Endothelial cell of umbilical vein (primary cell): ENCODE measurements at regions of chr15 and their contacts with region 1.

Region 1: GRCh38 chr15:83011271-83012075 is at the start of gene C15orf40:
- DNase-seq: peak; percentile 89
- H3K4me3 ChIP-seq: peak within 1 kb of the TSS; percentile 74 to 100 (median 87)
- H3K27ac ChIP-seq: peak within 1 kb of the TSS; percentile 64
- H3K4me1 ChIP-seq: peaks cover 17% of the 10 kb centered on the region
- H3K27me3 ChIP-seq: no peaks in the 10 kb centered on the region
- CTCF ChIP-seq: peak; percentile 57 to 75
- POLR2A ChIP-seq: peak; percentile 92
- total RNA-seq, gene C15orf40: 20.9 and 27.9 TPM in 2 replicates

Region 2: DNA sequence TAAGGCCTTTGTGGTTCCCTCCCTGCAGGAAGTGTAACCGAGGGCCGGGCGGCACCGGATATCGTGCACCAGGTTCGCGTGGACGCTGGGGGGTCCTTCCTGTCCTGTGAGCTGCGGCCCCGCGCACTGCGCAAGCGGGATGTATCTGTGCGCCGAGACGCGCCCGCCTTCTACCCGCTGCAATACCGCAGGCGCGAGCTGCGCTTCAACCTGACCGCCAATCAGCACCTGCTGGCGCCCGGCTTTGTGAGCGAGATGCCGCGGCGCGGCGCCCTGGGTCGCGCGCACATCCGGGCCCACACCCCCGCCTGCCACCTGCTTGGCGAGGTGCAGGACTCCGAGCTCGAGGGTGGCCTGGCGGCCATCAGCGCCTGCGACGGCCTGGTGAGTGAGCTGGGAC is 713.0 kb before region 1 on chr15:
- CTCF ChIA-PET with region 1: no interaction called
- POLR2A ChIA-PET with region 1: no interaction called
- dilution Hi-C with region 1: no loop called
- intact Hi-C with region 1: no loop called
- DNase-seq: no peak
- H3K4me3 ChIP-seq: no peak overlapping the region
- H3K27ac ChIP-seq: no peak overlapping the region
- H3K4me1 ChIP-seq: no peaks in the 10 kb centered on the region
- H3K27me3 ChIP-seq: no peaks in the 10 kb centered on the region
- CTCF ChIP-seq: no peak
- POLR2A ChIP-seq: no peak

Region 3: GRCh38 chr15:82963356-82964341 is 47.8 kb before region 1 on chr15:
- CTCF ChIA-PET with region 1: no interaction called
- POLR2A ChIA-PET with region 1: no interaction called
- dilution Hi-C with region 1: no loop called
- intact Hi-C with region 1: no loop called
- DNase-seq: no peak
- H3K4me3 ChIP-seq: no peak overlapping the region
- H3K27ac ChIP-seq: no peak overlapping the region
- H3K4me1 ChIP-seq: no peaks in the 10 kb centered on the region
- H3K27me3 ChIP-seq: peaks cover 0 to 1% of the 10 kb centered on the region in 2 experiments
- CTCF ChIP-seq: no peak
- POLR2A ChIP-seq: no peak

Region 4: DNA sequence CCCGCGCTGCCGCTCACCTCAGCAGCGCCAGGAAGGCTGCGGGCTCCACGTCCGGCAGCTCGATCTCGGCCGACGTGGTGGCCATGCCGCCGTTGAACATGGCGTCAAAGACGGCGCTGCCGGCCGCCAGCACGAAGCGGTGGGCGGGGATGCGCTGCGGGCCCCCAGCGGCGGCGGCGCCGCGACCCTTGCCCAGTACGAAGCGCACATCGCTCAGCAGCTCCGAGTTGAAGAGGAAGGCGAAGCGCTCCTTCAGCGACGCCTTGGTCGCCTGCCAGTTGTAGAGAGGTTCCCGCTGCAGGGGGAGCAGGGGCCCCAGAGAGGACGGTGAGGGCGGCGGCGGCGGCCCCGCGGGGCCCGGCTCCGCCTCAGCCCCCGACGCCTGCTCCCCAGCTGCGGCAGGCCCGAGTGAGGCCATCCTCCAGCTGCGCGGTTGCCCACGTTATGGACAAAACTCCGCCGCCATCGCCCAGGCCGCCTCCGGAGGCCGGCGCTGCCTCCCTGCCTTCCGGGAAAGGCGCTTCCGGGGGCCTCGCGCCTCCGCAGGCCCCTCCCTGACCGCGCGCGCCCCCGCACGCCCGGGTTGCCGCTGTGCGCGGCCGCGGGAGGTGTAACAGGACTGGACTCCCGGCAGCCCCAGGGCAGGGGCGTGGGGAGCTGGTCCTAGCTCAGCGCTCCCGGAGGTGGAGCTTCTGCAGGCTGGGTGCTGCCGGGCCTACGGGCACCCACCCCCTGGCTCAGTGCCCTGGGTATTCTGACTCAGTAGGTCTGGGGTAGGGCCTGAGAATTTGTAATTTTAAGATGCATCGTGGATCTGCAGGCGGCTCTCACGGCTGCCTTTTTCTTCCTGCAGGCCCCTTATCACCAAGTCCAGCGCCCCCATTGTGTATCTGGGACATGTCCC is 55.5 kb after region 1 on chr15 and contains the start of gene BTBD1:
- CTCF ChIA-PET with region 1: interaction called, 22 read pairs
- POLR2A ChIA-PET with region 1: interaction called, 3 read pairs
- dilution Hi-C with region 1: no loop called
- intact Hi-C with region 1: loop called (anchors 1 kb)
- DNase-seq: peak; percentile 93
- H3K4me3 ChIP-seq: peak within 1 kb of the TSS; percentile 75 to 99 (median 98)
- H3K27ac ChIP-seq: peak within 1 kb of the TSS; percentile 66
- H3K4me1 ChIP-seq: peaks cover 36% of the 10 kb centered on the region
- H3K27me3 ChIP-seq: no peaks in the 10 kb centered on the region
- CTCF ChIP-seq: peak in 1 of 2 donors; percentile 14
- POLR2A ChIP-seq: peak; percentile 95
- total RNA-seq, gene BTBD1: 56.9 and 58.0 TPM in 2 replicates

Region 5: DNA sequence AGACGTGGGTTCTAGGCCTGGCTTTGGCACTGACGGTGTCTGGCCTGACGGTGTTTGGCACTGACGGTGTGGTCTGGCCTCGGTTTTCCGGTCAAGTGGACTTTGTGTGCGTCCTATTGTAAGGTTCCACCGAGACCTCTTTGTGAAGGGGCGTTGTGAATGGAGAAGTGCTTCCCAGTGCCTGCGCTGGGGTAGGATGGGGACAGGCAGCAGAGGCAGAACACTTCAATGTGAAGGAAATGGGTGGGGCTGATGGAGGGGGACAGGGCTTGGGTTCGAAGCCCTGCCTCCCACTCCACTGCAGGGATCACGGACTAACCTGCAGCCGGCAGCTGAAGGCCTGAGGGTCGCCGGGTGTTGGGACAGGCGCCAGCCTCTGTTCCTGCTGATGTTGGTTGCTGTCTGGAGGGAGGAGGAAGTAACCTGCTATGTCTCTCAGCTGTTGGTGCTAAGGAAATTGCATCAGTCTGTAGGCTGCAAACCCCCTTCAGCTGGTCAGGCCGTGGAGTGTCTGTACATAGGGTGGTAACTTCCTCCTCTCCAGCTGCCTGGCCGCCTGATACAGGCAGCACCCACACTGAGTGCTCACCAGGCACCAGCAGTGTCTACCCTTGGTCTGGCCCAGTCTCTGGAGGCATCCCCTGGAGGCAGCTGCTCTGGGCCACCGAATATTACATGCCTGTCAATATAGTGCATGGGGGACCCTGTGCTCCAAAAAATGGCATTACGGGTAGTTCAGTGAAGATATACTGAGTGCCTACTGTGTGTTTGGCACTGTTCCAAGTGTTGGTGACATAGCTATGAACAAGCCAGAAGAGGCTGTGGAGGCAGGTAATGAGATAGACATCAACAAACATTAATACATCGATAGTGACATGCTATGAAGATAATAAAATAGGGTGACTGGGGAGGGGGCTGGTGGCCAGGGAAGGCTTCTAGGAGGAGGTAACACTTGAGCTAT is 97.1 kb after region 1 on chr15:
- CTCF ChIA-PET with region 1: interaction called, 11 read pairs
- POLR2A ChIA-PET with region 1: interaction called, 4 read pairs
- dilution Hi-C with region 1: no loop called
- intact Hi-C with region 1: loop called (anchors 1 kb)
- DNase-seq: peak; percentile 90
- H3K4me3 ChIP-seq: peak overlapping the region; percentile 55 to 77 (median 56)
- H3K27ac ChIP-seq: peak overlapping the region; percentile 95
- H3K4me1 ChIP-seq: peaks cover 56% of the 10 kb centered on the region
- H3K27me3 ChIP-seq: no peaks in the 10 kb centered on the region
- CTCF ChIP-seq: no peak
- POLR2A ChIP-seq: peak; percentile 60

Region 6: GRCh38 chr15:83339396-83339795 is 327.9 kb after region 1 on chr15:
- CTCF ChIA-PET with region 1: no interaction called
- POLR2A ChIA-PET with region 1: no interaction called
- dilution Hi-C with region 1: no loop called
- intact Hi-C with region 1: no loop called
- DNase-seq: no peak
- H3K4me3 ChIP-seq: no peak overlapping the region
- H3K27ac ChIP-seq: no peak overlapping the region
- H3K4me1 ChIP-seq: no peaks in the 10 kb centered on the region
- H3K27me3 ChIP-seq: no peaks in the 10 kb centered on the region
- CTCF ChIP-seq: no peak
- POLR2A ChIP-seq: no peak

Region 7: GRCh38 chr15:83436458-83437158 is 425.1 kb after region 1 on chr15:
- CTCF ChIA-PET with region 1: no interaction called
- POLR2A ChIA-PET with region 1: no interaction called
- dilution Hi-C with region 1: no loop called
- intact Hi-C with region 1: loop called (anchors 2 kb)
- DNase-seq: peak; percentile 47
- H3K4me3 ChIP-seq: no peak overlapping the region
- H3K27ac ChIP-seq: no peak overlapping the region
- H3K4me1 ChIP-seq: no peaks in the 10 kb centered on the region
- H3K27me3 ChIP-seq: peaks cover 0 to 3% of the 10 kb centered on the region in 2 experiments
- CTCF ChIP-seq: peak; percentile 20 to 45
- POLR2A ChIP-seq: no peak